ENCODE measurements at regions of chrX and their contacts with region 1.

Region 1: DNA sequence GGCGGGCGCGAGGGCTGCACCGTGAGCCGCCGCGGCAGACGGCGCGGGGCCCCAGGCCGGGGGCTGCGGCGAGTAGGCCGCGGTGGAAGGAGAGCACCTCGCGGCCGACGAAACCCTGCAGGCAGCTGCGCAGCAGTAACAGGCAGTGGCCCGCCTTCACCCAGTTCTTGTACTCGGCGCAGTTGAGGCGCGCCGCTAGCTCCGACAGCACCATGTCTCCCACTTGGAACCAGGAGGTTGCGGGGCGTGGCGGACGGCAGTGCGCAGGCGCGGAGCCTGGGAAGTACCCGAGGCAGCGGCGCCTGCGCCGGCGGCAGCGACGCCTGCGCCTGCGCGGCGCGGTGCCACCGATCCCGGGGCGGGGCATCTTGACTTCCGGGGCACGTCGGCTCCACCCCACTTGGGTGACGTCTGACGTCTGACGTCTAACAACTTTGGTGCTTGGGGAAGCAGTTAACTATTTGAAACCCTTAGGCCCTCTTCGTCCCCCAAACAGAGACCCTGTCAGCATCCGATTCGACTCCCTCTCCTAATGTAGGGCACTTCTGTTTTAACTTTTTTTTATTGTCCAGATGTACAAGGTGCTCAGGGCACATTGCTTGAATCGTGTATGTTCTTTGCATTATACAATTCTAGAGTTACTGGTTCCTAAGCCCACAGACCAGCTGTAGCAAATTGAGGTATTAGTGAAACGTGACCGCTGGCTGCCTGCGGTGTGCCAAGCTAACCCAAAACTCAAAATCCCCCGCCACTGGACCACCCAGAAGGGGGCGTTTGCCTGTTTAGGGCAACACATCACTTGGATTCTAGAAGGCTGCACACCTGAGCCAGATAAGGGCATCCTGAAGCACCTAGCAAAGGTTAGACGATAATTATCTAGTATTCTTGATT is at the start of gene CXorf38:
- DNase-seq: peak; percentile 94
- ATAC-seq: peak; percentile 78
- H3K4me3 Mint-ChIP-seq: peak within 1 kb of the TSS; percentile 97
- H3K27ac Mint-ChIP-seq: peak within 1 kb of the TSS; percentile 95
- H3K4me1 Mint-ChIP-seq: peaks cover 23% of the 10 kb centered on the region
- H3K27me3 Mint-ChIP-seq: no peaks in the 10 kb centered on the region
- total RNA-seq, gene CXorf38: 15.8 to 20.5 TPM

Region 2: DNA sequence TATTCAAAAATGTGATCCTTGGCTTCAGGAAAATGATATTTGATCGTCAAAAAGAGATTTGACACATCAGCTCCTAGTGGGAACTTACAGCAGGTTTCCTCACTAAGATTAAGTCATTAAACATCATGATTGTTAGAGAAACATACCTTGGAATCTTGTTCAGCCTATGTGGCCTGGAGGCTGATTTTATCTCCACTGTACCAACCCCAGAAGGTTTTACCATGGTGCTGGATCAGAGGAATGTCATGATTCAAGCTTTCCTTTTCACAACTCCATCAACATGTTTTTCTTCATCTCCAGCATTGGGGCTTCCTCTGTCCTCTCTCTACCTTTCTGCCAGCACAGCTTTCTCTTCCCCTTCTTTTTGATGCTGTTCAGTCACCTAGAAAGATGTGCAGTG is 1914.7 kb before region 1 on chrX:
- CTCF ChIA-PET with region 1: no interaction called
- POLR2A ChIA-PET with region 1: no interaction called
- intact Hi-C with region 1: no loop called
- DNase-seq: no peak
- ATAC-seq: no peak
- H3K4me3 Mint-ChIP-seq: no peak overlapping the region
- H3K27ac Mint-ChIP-seq: no peak overlapping the region
- H3K4me1 Mint-ChIP-seq: no peaks in the 10 kb centered on the region
- H3K27me3 Mint-ChIP-seq: peaks cover 2% of the 10 kb centered on the region

Region 3: DNA sequence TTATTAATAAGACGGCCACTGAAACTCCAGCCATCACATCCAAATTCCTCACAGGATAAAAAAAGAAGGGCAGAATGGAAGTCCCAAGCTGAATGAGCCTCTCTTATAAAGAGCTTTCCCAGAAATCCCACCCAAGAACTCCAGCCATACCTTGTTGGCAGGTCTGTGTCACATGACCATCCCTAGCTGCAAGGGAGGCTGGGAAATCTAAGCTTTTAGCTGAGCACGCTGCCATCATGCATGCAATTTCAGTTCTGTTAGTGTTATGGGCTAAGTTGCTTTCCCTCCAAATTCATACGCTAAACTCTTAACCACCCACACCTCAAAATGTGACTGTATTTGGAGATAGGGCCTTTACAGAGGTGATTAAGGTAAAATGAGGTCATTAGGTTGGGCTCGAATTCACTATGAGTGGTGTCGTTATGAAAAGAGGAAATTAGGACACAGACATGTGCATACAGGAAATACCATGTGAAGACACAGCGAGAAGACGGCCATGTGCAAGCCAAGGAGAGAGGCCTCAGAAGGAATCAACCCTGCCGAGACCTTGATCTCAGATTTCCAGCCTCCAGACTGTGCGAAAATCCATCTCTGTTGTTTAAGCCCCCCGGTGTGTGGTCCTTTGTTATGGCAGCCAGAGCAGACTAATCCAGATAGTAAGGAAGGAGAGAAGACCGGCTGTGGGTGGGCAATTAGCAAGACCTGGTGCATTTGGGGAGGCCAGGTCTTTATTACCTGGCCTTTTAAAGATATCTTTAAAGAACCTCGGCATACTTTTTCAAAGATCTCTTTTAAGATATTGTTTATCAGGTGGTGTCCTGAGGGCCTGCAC is 867.4 kb before region 1 on chrX:
- CTCF ChIA-PET with region 1: no interaction called
- POLR2A ChIA-PET with region 1: no interaction called
- intact Hi-C with region 1: no loop called
- DNase-seq: no peak
- ATAC-seq: no peak
- H3K4me3 Mint-ChIP-seq: no peak overlapping the region
- H3K27ac Mint-ChIP-seq: no peak overlapping the region
- H3K4me1 Mint-ChIP-seq: peaks cover 26% of the 10 kb centered on the region
- H3K27me3 Mint-ChIP-seq: no peaks in the 10 kb centered on the region

Region 4: DNA sequence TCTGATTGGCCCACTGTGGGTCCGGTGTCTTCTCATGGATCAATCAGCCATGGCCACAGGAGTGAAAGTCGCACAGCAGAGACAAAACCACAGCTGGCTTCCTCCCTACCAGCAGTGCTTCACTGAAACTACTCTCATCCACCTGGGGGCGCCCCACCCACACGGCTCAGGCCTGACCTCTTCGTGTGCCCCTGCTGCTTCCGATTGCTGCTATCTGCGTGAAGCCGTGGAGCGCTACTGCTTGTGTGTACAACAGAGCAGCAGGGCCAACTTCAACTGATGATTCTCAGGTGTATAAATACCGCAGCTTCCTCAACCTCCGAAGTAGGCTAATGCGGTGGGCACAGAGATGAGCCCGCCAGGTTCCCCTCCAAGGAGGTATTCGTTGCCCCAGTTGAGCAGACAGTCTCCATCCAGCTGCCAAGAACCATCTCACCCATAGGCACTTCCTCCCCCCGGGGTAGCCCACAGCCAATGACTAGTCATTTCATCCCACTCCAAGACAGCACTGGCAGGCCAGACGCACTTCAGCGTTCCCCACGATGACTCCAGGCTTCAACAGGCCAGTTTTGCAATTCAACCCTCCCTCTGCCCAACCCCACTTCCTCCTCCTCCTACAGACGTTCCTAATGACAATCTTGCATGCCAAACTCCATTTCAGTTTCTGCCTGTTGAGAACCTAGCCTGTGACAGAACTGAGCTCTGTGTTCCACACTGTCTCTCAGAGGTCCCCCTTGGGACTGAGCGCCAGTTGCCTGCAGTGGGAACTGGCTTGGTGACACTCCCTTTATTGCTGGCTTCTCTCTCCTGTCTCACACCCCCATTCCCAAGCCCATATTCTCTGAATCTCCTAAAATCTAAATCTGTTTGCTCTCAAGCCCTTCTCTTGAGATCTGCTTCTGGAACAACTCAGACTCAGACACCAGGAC is 108.1 kb before region 1 on chrX:
- CTCF ChIA-PET with region 1: interaction called, 17 read pairs
- POLR2A ChIA-PET with region 1: interaction called, 5 read pairs
- intact Hi-C with region 1: loop called (anchors 1 kb)
- DNase-seq: peak; percentile 86
- ATAC-seq: peak; percentile 91
- H3K4me3 Mint-ChIP-seq: no peak overlapping the region
- H3K27ac Mint-ChIP-seq: peak overlapping the region; percentile 69
- H3K4me1 Mint-ChIP-seq: peaks cover 20% of the 10 kb centered on the region
- H3K27me3 Mint-ChIP-seq: no peaks in the 10 kb centered on the region

Region 5: GRCh38 chrX:40685362-40685918 is 37.9 kb after region 1 on chrX:
- CTCF ChIA-PET with region 1: interaction called, 11 read pairs
- POLR2A ChIA-PET with region 1: no interaction called
- intact Hi-C with region 1: no loop called
- DNase-seq: peak; percentile 4
- ATAC-seq: peak; percentile 42
- H3K4me3 Mint-ChIP-seq: no peak overlapping the region
- H3K27ac Mint-ChIP-seq: peak overlapping the region; percentile 60
- H3K4me1 Mint-ChIP-seq: peaks cover 26% of the 10 kb centered on the region
- H3K27me3 Mint-ChIP-seq: no peaks in the 10 kb centered on the region

Region 6: GRCh38 chrX:40792433-40792832 is 144.9 kb after region 1 on chrX:
- CTCF ChIA-PET with region 1: interaction called, 68 read pairs
- POLR2A ChIA-PET with region 1: no interaction called
- intact Hi-C with region 1: loop called (anchors 1 kb)
- DNase-seq: no peak
- ATAC-seq: no peak
- H3K4me3 Mint-ChIP-seq: no peak overlapping the region
- H3K27ac Mint-ChIP-seq: no peak overlapping the region
- H3K4me1 Mint-ChIP-seq: peaks cover 2% of the 10 kb centered on the region
- H3K27me3 Mint-ChIP-seq: no peaks in the 10 kb centered on the region

Region 7: GRCh38 chrX:40887476-40887875 is 239.9 kb after region 1 on chrX:
- CTCF ChIA-PET with region 1: no interaction called
- POLR2A ChIA-PET with region 1: no interaction called
- intact Hi-C with region 1: no loop called
- DNase-seq: no peak
- ATAC-seq: no peak
- H3K4me3 Mint-ChIP-seq: no peak overlapping the region
- H3K27ac Mint-ChIP-seq: no peak overlapping the region
- H3K4me1 Mint-ChIP-seq: peaks cover 3% of the 10 kb centered on the region
- H3K27me3 Mint-ChIP-seq: no peaks in the 10 kb centered on the region

Region 8: GRCh38 chrX:41250867-41251266 is 603.3 kb after region 1 on chrX:
- CTCF ChIA-PET with region 1: no interaction called
- POLR2A ChIA-PET with region 1: no interaction called
- intact Hi-C with region 1: loop called (anchors 5 to 10 kb)
- DNase-seq: no peak
- ATAC-seq: no peak
- H3K4me3 Mint-ChIP-seq: no peak overlapping the region
- H3K27ac Mint-ChIP-seq: no peak overlapping the region
- H3K4me1 Mint-ChIP-seq: no peaks in the 10 kb centered on the region
- H3K27me3 Mint-ChIP-seq: no peaks in the 10 kb centered on the region

Region 9: GRCh38 chrX:41384041-41384705 is 736.6 kb after region 1 on chrX:
- CTCF ChIA-PET with region 1: no interaction called
- POLR2A ChIA-PET with region 1: no interaction called
- intact Hi-C with region 1: no loop called
- DNase-seq: peak; percentile 81
- ATAC-seq: peak; percentile 71
- H3K4me3 Mint-ChIP-seq: no peak overlapping the region
- H3K27ac Mint-ChIP-seq: peak overlapping the region; percentile 95
- H3K4me1 Mint-ChIP-seq: peaks cover 33% of the 10 kb centered on the region
- H3K27me3 Mint-ChIP-seq: no peaks in the 10 kb centered on the region